Breast epithelium (tissue), 4 donors: ENCODE measurements at regions of chr10 and their contacts with region 1.

Region 1: DNA sequence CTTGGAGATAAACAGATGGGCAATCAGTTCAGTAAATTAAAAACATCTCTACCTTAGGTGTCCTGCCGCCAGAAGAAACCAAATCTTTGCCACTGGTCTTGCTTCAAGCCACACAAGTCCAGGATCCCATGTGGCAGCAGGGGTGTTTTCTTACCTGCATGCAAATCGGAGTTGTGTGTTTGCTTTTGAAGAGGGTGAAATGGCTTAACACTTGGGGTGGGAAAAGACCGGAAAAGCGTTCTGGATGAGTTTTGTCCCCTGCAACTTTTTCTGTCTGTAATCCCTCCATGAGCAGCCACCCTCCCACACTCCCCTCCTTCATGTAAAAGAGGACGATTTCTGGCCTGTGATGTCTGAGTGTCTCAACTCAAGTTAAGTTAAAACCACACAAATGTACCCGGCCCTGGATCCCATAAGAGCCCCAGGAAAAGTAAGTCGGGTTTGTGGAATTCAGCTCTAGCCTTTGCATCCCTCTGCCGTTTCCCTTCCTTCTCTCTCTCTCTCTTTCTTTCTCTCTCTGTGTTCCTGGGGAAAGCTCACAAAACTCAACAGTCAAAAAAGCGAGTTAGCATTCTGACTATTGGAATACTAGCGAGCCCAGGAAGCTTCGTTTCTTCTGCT is 178.5 kb downstream of the TCF7L2 start:
- DNase-seq: no peak
- H3K4me3 ChIP-seq: peak overlapping the region; percentile 30 to 63 (median 33)
- H3K27ac ChIP-seq: peak overlapping the region; percentile 43 to 85
- H3K4me1 ChIP-seq: peaks cover 0 to 8% of the 10 kb centered on the region in 2 donors
- H3K27me3 ChIP-seq: no peaks in the 10 kb centered on the region
- CTCF ChIP-seq: no peak
- POLR2A ChIP-seq: no peak

Region 2: DNA sequence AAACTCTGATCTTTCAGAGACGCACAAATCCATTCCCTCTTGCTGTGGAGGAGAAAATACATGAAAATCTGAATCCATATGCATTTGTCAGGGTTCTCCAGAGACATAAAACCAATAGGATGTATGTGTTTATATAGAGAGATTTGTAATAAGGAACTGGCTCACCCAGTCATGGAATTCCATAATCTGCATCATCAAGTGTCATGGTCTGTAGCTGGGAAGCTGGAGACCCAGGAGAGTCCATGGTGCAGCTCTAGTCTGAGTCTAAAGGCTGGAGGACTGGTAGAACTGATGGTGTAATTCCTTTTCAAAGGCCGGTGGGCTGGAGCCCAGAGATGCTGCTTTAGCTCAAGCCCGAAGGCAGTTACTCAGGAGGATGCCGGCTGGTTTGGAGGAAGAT is 44.5 kb before region 1 on chr10:
- intact Hi-C with region 1: loop called (anchors 2 kb)
- DNase-seq: no peak
- H3K4me3 ChIP-seq: no peak overlapping the region
- H3K27ac ChIP-seq: peak overlapping the region in 1 of 2 donors; percentile 38
- H3K4me1 ChIP-seq: peaks cover 0 to 3% of the 10 kb centered on the region in 2 donors
- H3K27me3 ChIP-seq: no peaks in the 10 kb centered on the region
- CTCF ChIP-seq: no peak
- POLR2A ChIP-seq: no peak